PC-3 (cell line): ENCODE measurements at regions of chr10 and their contacts with region 1.

Region 1: DNA sequence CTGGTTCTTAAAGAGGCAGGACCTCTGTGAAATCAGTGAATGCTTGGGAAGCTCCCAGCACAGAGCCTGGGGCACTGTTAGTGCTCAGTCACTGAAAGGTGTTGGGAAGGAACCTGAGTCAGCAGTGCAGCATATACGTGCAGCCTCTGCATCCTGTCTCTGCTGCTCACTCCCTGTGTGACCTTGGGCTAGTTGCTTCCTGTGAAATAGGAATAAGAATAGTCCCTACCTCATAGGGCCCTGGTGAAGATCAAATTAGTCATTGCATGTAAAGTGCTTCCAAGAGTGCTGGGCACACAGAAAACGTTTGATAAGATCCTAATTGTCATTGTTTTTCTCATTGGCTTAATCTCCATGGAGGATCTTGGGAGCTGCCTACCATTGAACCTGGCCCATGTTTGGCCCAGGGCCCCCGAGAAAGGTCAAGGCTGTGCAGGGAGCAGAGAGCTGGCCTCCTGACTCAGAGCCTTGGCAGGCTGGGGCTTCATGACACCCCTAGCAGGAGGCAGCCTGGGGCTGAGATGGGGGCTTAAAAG is 73.3 kb upstream of the COL13A1 start:
- DNase-seq: peak; percentile 100
- ATAC-seq: peak; percentile 85
- H3K4me3 ChIP-seq: no peak overlapping the region
- H3K27ac ChIP-seq: peak overlapping the region; percentile 57
- H3K4me1 ChIP-seq: peaks cover 30% of the 10 kb centered on the region
- H3K27me3 ChIP-seq: no peaks in the 10 kb centered on the region
- CTCF ChIP-seq: no peak

Region 2: GRCh38 chr10:69541463-69541862 is 186.9 kb before region 1 on chr10:
- CTCF ChIA-PET with region 1: no interaction called
- POLR2A ChIA-PET with region 1: no interaction called
- intact Hi-C with region 1: no loop called
- DNase-seq: no peak
- ATAC-seq: no peak
- H3K4me3 ChIP-seq: no peak overlapping the region
- H3K27ac ChIP-seq: no peak overlapping the region
- H3K4me1 ChIP-seq: no peaks in the 10 kb centered on the region
- H3K27me3 ChIP-seq: no peaks in the 10 kb centered on the region
- CTCF ChIP-seq: no peak

Region 3: GRCh38 chr10:69649786-69650555 is 78.4 kb before region 1 on chr10:
- CTCF ChIA-PET with region 1: no interaction called
- POLR2A ChIA-PET with region 1: no interaction called
- intact Hi-C with region 1: no loop called
- DNase-seq: peak; percentile 64
- ATAC-seq: peak; percentile 74
- H3K4me3 ChIP-seq: no peak overlapping the region
- H3K27ac ChIP-seq: no peak overlapping the region
- H3K4me1 ChIP-seq: no peaks in the 10 kb centered on the region
- H3K27me3 ChIP-seq: peaks cover 15% of the 10 kb centered on the region; the same call in 1 of the 2 replicates
- CTCF ChIP-seq: peak; percentile 77

Region 4: GRCh38 chr10:69745698-69746097 is 17.3 kb after region 1 on chr10:
- CTCF ChIA-PET with region 1: no interaction called
- POLR2A ChIA-PET with region 1: no interaction called
- intact Hi-C with region 1: loop called (anchors 2 kb)
- DNase-seq: no peak
- ATAC-seq: no peak
- H3K4me3 ChIP-seq: no peak overlapping the region
- H3K27ac ChIP-seq: no peak overlapping the region
- H3K4me1 ChIP-seq: peaks cover 11% of the 10 kb centered on the region
- H3K27me3 ChIP-seq: peaks cover 2% of the 10 kb centered on the region; the same call in 1 of the 2 replicates
- CTCF ChIP-seq: no peak

Region 5: GRCh38 chr10:69774596-69774995 is 46.2 kb after region 1 on chr10:
- CTCF ChIA-PET with region 1: no interaction called
- POLR2A ChIA-PET with region 1: no interaction called
- intact Hi-C with region 1: no loop called
- DNase-seq: peak; percentile 25
- ATAC-seq: no peak
- H3K4me3 ChIP-seq: no peak overlapping the region
- H3K27ac ChIP-seq: no peak overlapping the region
- H3K4me1 ChIP-seq: peaks cover 5% of the 10 kb centered on the region
- H3K27me3 ChIP-seq: no peaks in the 10 kb centered on the region
- CTCF ChIP-seq: peak; percentile 48